A673 (cell line): ENCODE measurements at regions of chr7 and their contacts with region 1.

Region 1: GRCh38 chr7:67462781-67463191 is 466.2 kb downstream of the TYW1 start:
- DNase-seq: no peak
- H3K4me3 ChIP-seq: no peak overlapping the region
- H3K27ac ChIP-seq: no peak overlapping the region
- H3K4me1 ChIP-seq: no peaks in the 10 kb centered on the region
- H3K27me3 ChIP-seq: no peaks in the 10 kb centered on the region
- CTCF ChIP-seq: no peak

Region 2: DNA sequence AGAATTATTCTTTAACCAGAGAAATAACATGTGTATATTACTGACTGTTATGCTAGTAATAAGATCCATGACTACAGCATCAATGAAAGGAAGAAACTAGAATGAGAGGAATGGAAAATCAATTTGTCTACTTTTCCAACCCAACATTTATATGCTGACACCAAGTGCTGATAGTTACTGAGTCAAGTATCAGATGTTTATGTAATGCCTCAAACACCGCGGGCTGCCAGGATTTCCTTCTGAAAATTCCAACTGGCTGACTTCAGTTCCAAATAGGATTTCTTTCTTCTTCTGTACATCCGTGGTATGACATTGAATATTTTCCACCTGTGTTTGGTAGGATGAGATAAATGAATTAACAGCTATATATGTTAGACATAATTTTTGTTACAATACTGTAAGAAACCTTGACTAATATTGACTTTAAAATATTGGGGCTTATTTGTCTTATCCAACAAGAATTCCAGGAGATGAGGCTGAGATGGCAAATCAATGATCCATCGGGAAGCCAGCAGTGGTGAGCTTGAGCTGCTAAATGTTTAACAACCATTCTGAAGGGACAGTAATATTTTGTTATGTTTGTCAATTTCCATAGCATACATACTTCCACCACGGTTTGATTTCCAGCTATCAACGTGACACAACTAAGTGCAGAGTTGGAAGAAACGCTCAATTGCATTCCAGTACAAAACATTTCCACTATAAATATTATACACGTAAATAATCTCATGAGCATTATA is 1700.3 kb after region 1 on chr7:
- CTCF ChIA-PET with region 1: no interaction called
- POLR2A ChIA-PET with region 1: no interaction called
- intact Hi-C with region 1: loop called (anchors 5 kb)
- DNase-seq: no peak
- H3K4me3 ChIP-seq: no peak overlapping the region
- H3K27ac ChIP-seq: no peak overlapping the region
- H3K4me1 ChIP-seq: no peaks in the 10 kb centered on the region
- H3K27me3 ChIP-seq: no peaks in the 10 kb centered on the region
- CTCF ChIP-seq: no peak